Ovary (tissue), 10 donors: ENCODE measurements at regions of chr12 and their contacts with region 1.

Region 1: GRCh38 chr12:31629756-31630732 is 29.4 kb upstream of the ETFBKMT start:
- DNase-seq: peak; percentile 62 to 80 (median 71)
- H3K4me3 ChIP-seq: peak overlapping the region; percentile 12
- H3K27ac ChIP-seq: peak overlapping the region in 1 of 2 donors; percentile 78
- H3K4me1 ChIP-seq: peaks cover 9% of the 10 kb centered on the region
- H3K27me3 ChIP-seq: no peaks in the 10 kb centered on the region
- CTCF ChIP-seq: no peak
- EP300 ChIP-seq: no peak
- POLR2A ChIP-seq: no peak

Region 2: GRCh38 chr12:31406345-31406744 is 223.7 kb before region 1 on chr12:
- intact Hi-C with region 1: loop called in 2 of 4 experiments (anchors 5 kb)
- DNase-seq: no peak
- H3K4me3 ChIP-seq: no peak overlapping the region
- H3K27ac ChIP-seq: no peak overlapping the region
- H3K4me1 ChIP-seq: no peaks in the 10 kb centered on the region
- H3K27me3 ChIP-seq: no peaks in the 10 kb centered on the region
- CTCF ChIP-seq: no peak
- EP300 ChIP-seq: no peak
- POLR2A ChIP-seq: no peak

Region 3: DNA sequence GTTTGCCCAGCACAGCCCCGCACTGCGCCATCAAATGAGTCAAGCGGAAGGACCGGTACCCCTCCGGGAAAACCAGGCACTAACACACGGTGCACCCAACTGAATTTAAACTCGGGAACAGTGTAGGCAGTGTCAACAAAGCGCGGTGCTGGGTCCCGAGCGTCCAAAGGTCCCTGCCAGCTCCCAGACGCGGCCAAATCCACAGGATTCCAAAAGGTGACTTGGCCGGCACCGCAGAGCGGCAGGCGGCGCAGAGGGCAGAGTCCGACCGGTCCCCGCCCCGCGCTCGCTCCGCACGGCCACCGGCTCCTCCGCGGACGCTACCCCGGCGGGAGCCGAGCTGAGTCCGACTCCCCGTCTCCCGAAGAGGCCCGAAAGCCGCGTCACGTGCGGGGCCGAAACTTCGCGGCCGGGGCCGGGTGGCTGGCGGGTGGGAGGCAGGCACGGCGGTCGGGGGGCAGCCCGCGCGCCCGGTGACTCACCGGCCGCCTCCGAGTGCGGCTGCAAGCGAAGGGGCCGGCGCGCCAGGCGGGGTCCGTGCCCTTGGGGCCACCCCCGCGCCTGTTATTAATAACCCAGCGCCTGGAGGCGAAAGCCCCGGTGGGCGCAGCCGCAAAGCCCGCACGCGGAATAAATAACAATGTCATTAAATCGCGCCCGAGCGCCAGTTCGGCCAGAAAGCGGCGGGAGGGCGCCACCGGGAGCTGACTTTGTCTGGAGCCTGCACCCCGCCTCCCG is 40.0 kb before region 1 on chr12:
- intact Hi-C with region 1: no loop called
- DNase-seq: peak; percentile 65 to 83 (median 77)
- H3K4me3 ChIP-seq: peak overlapping the region; percentile 95
- H3K27ac ChIP-seq: peak overlapping the region; percentile 98 to 99
- H3K4me1 ChIP-seq: peaks cover 3% of the 10 kb centered on the region
- H3K27me3 ChIP-seq: no peaks in the 10 kb centered on the region
- CTCF ChIP-seq: peak in 1 of 3 donors; percentile 7
- EP300 ChIP-seq: no peak
- POLR2A ChIP-seq: peak; percentile 4